Caco-2 (cell line): ENCODE measurements at regions of chr10 and their contacts with region 1.

Region 1: DNA sequence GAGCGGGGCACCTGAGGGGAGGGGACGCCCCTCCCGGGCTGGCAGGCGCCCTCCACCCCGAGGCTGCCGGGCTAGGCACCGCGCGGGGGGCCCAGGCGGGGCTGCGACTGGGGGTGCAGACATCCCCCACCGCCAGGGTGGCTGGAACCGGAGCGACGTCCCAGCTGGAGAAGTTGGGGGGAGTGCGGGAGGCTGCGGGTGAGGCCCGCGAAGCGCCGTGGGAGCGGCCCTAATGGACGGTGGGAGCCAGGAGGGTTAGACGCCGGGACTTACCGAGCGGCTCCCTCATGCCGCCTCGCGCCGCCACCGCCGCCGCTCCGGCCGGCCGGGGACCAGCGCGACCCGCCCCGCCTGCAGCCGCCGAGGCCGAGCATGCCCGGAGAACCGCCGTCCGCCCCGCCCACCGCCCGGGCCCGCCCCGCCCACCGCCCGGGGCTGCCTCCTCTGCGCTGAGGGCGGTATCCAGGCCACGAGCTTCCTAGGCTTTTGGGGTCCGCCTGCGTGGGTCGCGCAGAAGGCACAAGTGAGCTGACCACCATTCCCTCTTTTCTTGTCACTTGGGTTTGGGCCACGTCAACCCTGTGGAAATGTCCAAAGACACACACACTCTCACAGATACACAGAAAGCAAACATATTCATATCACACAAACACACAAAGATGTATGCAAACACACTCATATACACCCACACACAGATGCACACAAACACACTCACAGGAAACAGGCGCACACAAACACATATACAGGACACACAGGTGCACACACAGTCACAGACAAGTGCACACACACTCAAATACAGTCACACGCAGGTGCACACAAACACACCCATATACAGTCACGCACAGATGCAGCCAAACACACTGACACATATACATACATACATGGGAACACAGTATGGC is at the start of gene JCAD:
- DNase-seq: peak; percentile 80 to 90
- H3K4me3 ChIP-seq: peak within 1 kb of the TSS; percentile 81
- H3K4me3 Mint-ChIP-seq: peak within 1 kb of the TSS; percentile 78
- H3K27ac Mint-ChIP-seq: peak within 1 kb of the TSS; percentile 54
- H3K4me1 ChIP-seq: peaks cover 46% of the 10 kb centered on the region
- H3K4me1 Mint-ChIP-seq: peaks cover 46% of the 10 kb centered on the region
- H3K27me3 ChIP-seq: no peaks in the 10 kb centered on the region
- H3K27me3 Mint-ChIP-seq: no peaks in the 10 kb centered on the region
- CTCF ChIP-seq: no peak
- total RNA-seq, gene JCAD: 10.0 and 13.0 TPM in 2 replicates

Region 2: GRCh38 chr10:29635711-29636144 is 423.7 kb before region 1 on chr10:
- CTCF ChIA-PET with region 1: no interaction called
- POLR2A ChIA-PET with region 1: no interaction called
- intact Hi-C with region 1: loop called (anchors 10 kb)
- DNase-seq: peak; percentile 88 to 93
- H3K4me3 ChIP-seq: peak overlapping the region; percentile 23
- H3K4me3 Mint-ChIP-seq: peak overlapping the region; percentile 69
- H3K27ac Mint-ChIP-seq: peak overlapping the region; percentile 85
- H3K4me1 ChIP-seq: peaks cover 38% of the 10 kb centered on the region
- H3K4me1 Mint-ChIP-seq: peaks cover 48% of the 10 kb centered on the region
- H3K27me3 ChIP-seq: no peaks in the 10 kb centered on the region
- H3K27me3 Mint-ChIP-seq: no peaks in the 10 kb centered on the region
- CTCF ChIP-seq: peak in 1 of 2 experiments; percentile 50

Region 3: DNA sequence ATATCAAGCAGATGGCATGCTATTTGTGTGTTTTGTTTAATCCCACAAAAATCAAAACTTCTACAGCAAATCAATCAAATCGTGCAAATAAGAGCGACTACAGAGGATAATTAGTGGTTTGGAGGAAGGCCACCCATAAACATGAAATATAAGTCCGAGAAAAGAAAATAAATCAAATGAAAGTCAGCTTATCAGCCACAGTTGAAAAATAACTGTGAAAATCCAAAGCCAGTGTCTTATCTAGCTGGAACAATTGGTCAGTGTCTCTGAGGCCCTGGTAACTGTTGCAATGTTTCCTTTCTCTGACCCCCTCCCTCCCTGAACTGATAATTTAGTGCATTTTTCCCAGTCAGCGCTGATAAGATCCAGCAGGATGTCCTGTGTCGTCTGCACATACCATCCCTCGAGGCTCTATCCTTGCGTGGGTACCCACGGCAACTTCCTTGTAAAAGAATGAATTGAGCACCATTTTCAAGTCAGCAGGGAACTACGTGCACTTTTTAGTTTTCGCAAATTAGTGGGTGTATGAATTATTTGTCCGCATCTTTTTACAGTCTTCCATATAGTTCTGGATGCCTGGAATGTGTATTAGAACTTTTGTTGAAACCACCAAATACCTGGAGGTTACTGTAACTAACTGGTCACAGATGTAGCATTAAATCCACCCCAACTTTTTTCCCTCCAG is 10.7 kb after region 1 on chr10:
- CTCF ChIA-PET with region 1: no interaction called
- POLR2A ChIA-PET with region 1: no interaction called
- intact Hi-C with region 1: loop called (anchors 1 kb)
- DNase-seq: peak; percentile 75 to 78
- H3K4me3 ChIP-seq: no peak overlapping the region
- H3K4me3 Mint-ChIP-seq: peak overlapping the region; percentile 15
- H3K27ac Mint-ChIP-seq: peak overlapping the region; percentile 8
- H3K4me1 ChIP-seq: peaks cover 17% of the 10 kb centered on the region
- H3K4me1 Mint-ChIP-seq: peaks cover 19% of the 10 kb centered on the region
- H3K27me3 ChIP-seq: no peaks in the 10 kb centered on the region
- H3K27me3 Mint-ChIP-seq: no peaks in the 10 kb centered on the region
- CTCF ChIP-seq: no peak

Region 4: GRCh38 chr10:30151581-30152389 is 92.3 kb after region 1 on chr10:
- CTCF ChIA-PET with region 1: no interaction called
- POLR2A ChIA-PET with region 1: no interaction called
- intact Hi-C with region 1: loop called (anchors 1 kb)
- DNase-seq: no peak
- H3K4me3 ChIP-seq: no peak overlapping the region
- H3K4me3 Mint-ChIP-seq: no peak overlapping the region
- H3K27ac Mint-ChIP-seq: no peak overlapping the region
- H3K4me1 ChIP-seq: peaks cover 16% of the 10 kb centered on the region
- H3K4me1 Mint-ChIP-seq: peaks cover 25% of the 10 kb centered on the region
- H3K27me3 ChIP-seq: no peaks in the 10 kb centered on the region
- H3K27me3 Mint-ChIP-seq: no peaks in the 10 kb centered on the region
- CTCF ChIP-seq: no peak

Region 5: DNA sequence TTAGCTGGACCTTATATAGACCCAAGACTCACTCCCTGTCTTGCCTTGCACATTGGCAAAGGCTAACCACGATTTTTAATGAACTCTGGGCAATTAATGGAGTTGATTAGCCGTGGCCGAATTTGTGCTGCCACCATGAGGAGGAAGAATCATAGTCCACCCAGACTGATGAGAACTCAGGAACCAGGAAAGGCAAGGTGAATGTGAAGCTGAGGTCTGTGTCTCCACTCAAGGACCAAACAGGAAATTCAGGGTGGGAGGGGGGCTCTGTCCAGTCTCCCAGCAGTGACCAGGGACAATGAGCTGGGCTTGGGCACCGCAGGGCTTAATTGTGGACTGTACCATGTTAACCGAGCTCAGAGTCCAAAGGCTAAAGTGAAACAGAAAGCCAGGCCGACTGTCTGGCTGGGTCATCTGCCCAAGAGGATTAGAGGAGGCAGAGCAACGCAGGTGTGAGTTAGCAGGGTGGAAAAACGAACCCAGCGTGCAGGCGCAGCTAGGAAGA is 127.0 kb after region 1 on chr10:
- CTCF ChIA-PET with region 1: no interaction called
- POLR2A ChIA-PET with region 1: no interaction called
- intact Hi-C with region 1: loop called (anchors 2 kb)
- DNase-seq: peak; percentile 29 to 54
- H3K4me3 ChIP-seq: no peak overlapping the region
- H3K4me3 Mint-ChIP-seq: no peak overlapping the region
- H3K27ac Mint-ChIP-seq: peak overlapping the region; percentile 60
- H3K4me1 ChIP-seq: peaks cover 66% of the 10 kb centered on the region
- H3K4me1 Mint-ChIP-seq: peaks cover 61% of the 10 kb centered on the region
- H3K27me3 ChIP-seq: no peaks in the 10 kb centered on the region
- H3K27me3 Mint-ChIP-seq: no peaks in the 10 kb centered on the region
- CTCF ChIP-seq: no peak

Region 6: DNA sequence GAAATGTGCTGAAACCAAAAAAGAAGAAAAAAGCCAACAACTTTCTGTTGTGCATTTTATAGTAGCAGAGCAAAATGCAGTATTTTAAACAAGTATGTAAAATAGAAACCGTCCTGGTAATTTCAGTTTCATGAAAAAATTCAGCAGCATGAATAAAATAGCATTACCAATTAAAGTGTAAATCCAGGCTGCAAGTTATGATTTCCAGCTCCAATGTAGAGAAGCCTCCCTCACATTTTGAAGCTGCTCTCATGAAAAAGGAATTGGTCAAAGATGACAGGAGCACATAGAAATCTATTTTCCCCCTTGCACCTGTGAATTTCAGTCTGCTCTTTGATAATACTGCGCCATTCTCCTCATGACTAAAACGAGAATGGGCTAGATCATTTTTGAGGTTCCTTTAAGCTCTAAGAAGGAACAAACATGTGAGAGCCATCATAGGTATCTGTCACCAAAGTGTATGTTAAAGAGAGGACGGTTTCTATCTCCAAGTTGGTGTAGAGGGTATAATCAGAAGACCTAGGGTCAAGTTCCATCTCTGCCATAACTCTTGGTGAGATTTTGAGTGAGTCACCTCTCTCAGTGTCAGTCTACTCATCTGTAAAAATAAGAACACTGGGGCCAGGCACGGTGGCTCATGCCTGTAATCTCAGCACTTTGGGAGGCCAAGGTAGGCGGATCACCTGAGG is 182.1 kb after region 1 on chr10:
- CTCF ChIA-PET with region 1: interaction called, 5 read pairs
- POLR2A ChIA-PET with region 1: no interaction called
- intact Hi-C with region 1: loop called (anchors 1 kb)
- DNase-seq: no peak
- H3K4me3 ChIP-seq: no peak overlapping the region
- H3K4me3 Mint-ChIP-seq: no peak overlapping the region
- H3K27ac Mint-ChIP-seq: no peak overlapping the region
- H3K4me1 ChIP-seq: no peaks in the 10 kb centered on the region; the same call in 1 of the 2 replicates
- H3K4me1 Mint-ChIP-seq: no peaks in the 10 kb centered on the region
- H3K27me3 ChIP-seq: no peaks in the 10 kb centered on the region
- H3K27me3 Mint-ChIP-seq: no peaks in the 10 kb centered on the region
- CTCF ChIP-seq: no peak